Activated naive CD8-positive, alpha-beta T cell treated with anti-CD3 and anti-CD28 coated beads, Interleukin-2, amount 10 ng/mL, durations not matched to agents 7 days and 5 days (primary cell): ENCODE measurements at regions of chr2 and their contacts with region 1.

Region 1: GRCh38 chr2:134118279-134119116 is 135.4 kb upstream of the MGAT5 start:
- DNase-seq: peak; percentile 60
- ATAC-seq: peak; percentile 39
- H3K4me3 Mint-ChIP-seq: peak overlapping the region; percentile 97
- H3K27ac Mint-ChIP-seq: no peak overlapping the region
- H3K4me1 Mint-ChIP-seq: peaks cover 22% of the 10 kb centered on the region
- H3K27me3 Mint-ChIP-seq: peaks cover 4% of the 10 kb centered on the region

Region 2: GRCh38 chr2:134137182-134137611 is 18.7 kb after region 1 on chr2:
- POLR2A ChIA-PET with region 1: no interaction called
- DNase-seq: no peak
- ATAC-seq: peak; percentile 63
- H3K4me3 Mint-ChIP-seq: peak overlapping the region; percentile 54
- H3K27ac Mint-ChIP-seq: peak overlapping the region; percentile 8
- H3K4me1 Mint-ChIP-seq: peaks cover 31% of the 10 kb centered on the region
- H3K27me3 Mint-ChIP-seq: no peaks in the 10 kb centered on the region

Region 3: DNA sequence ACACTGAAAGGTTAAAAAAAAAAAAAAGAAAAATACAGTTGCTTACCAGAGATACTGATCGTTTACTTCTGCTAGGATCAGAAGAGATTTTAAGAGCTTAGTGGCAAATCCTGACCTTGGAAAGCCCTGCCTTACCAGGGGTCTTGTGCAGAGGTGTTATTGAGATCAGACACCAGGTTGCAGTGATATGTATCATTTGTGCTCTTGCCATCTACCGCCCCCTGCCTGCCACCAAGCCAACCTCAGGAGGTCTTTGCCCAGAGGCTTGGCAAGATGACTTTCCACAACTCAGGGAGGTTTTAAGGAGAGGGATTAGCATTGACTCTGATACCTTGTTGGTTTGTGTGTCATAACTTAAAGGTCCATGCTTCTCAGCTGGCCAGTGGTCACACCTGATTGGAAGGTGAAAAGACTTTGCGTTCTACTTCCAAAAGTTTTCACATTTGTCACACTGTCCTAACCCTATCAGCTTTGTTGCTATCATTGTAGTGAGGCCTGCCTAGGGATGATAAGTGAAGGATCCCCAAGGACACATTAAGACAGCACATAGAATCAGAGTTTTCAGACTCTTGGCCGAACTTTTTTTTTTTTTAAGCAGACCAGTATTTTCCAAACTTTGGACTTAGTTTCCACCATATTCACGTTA is 89.2 kb after region 1 on chr2:
- POLR2A ChIA-PET with region 1: interaction called, 11 read pairs
- DNase-seq: peak; percentile 61
- ATAC-seq: peak; percentile 89
- H3K4me3 Mint-ChIP-seq: no peak overlapping the region
- H3K27ac Mint-ChIP-seq: no peak overlapping the region
- H3K4me1 Mint-ChIP-seq: peaks cover 9% of the 10 kb centered on the region
- H3K27me3 Mint-ChIP-seq: no peaks in the 10 kb centered on the region

Region 4: DNA sequence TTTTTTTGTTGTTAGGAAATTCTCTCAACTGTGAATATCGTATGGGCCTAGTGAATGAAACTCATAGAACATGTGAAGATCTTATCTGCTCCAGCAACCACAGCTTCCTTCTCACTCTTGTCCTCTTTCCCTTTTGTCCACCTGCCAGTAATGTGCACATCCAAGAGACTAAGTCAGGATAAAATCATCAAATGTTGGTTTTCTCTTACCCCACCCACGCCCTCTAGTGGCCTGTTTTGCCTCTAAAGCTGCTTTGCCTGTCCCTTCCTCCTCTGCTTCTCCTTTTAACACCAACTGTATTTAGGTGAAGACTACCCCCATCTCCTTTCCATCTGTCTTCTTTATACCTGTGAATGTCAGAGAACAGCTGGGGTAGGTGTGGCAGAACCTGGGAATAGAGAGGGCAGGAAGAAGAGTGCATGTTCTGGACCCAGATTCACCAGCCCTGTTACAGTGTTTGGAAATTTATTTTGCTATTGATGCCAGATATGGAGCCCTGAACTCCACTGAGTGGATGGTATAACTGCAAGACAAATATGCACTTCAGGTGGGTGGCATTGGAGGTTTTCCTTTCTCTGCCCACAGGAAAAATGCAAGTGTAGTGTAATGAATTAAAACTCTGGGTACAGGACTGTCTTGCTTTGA is 127.0 kb after region 1 on chr2:
- POLR2A ChIA-PET with region 1: interaction called, 13 read pairs
- DNase-seq: peak; percentile 60
- ATAC-seq: peak; percentile 56
- H3K4me3 Mint-ChIP-seq: peak overlapping the region; percentile 44
- H3K27ac Mint-ChIP-seq: peak overlapping the region; percentile 19
- H3K4me1 Mint-ChIP-seq: peaks cover 51% of the 10 kb centered on the region
- H3K27me3 Mint-ChIP-seq: no peaks in the 10 kb centered on the region

Region 5: GRCh38 chr2:134282629-134283400 is 164.3 kb after region 1 on chr2:
- POLR2A ChIA-PET with region 1: interaction called, 10 read pairs
- DNase-seq: peak; percentile 50
- ATAC-seq: peak; percentile 92
- H3K4me3 Mint-ChIP-seq: peak overlapping the region; percentile 82
- H3K27ac Mint-ChIP-seq: peak overlapping the region; percentile 90
- H3K4me1 Mint-ChIP-seq: peaks cover 42% of the 10 kb centered on the region
- H3K27me3 Mint-ChIP-seq: no peaks in the 10 kb centered on the region

Region 6: GRCh38 chr2:134411828-134412638 is 293.5 kb after region 1 on chr2:
- POLR2A ChIA-PET with region 1: interaction called, 17 read pairs
- DNase-seq: peak; percentile 64
- ATAC-seq: peak; percentile 99
- H3K4me3 Mint-ChIP-seq: peak overlapping the region; percentile 37
- H3K27ac Mint-ChIP-seq: peak overlapping the region; percentile 74
- H3K4me1 Mint-ChIP-seq: peaks cover 33% of the 10 kb centered on the region
- H3K27me3 Mint-ChIP-seq: no peaks in the 10 kb centered on the region